Endothelial cell of umbilical vein (primary cell): ENCODE measurements at regions of chr21 and their contacts with region 1.

Region 1: GRCh38 chr21:29195981-29196669 is 65.7 kb downstream of the MAP3K7CL start:
- DNase-seq: peak; percentile 90
- H3K4me3 ChIP-seq: peak overlapping the region in 2 of 3 experiments; percentile 38 to 44
- H3K27ac ChIP-seq: peak overlapping the region; percentile 92
- H3K4me1 ChIP-seq: peaks cover 32% of the 10 kb centered on the region
- H3K27me3 ChIP-seq: no peaks in the 10 kb centered on the region
- CTCF ChIP-seq: peak; percentile 47 to 56
- POLR2A ChIP-seq: no peak

Region 2: GRCh38 chr21:29208682-29209059 is 12.5 kb after region 1 on chr21:
- CTCF ChIA-PET with region 1: interaction called, 16 read pairs
- POLR2A ChIA-PET with region 1: no interaction called
- dilution Hi-C with region 1: no loop called
- intact Hi-C with region 1: no loop called
- DNase-seq: peak; percentile 84
- H3K4me3 ChIP-seq: peak overlapping the region in 1 of 3 experiments; percentile 38
- H3K27ac ChIP-seq: peak overlapping the region; percentile 97
- H3K4me1 ChIP-seq: peaks cover 31% of the 10 kb centered on the region
- H3K27me3 ChIP-seq: no peaks in the 10 kb centered on the region
- CTCF ChIP-seq: no peak
- POLR2A ChIP-seq: no peak

Region 3: GRCh38 chr21:29217818-29218291 is 21.7 kb after region 1 on chr21:
- CTCF ChIA-PET with region 1: no interaction called
- POLR2A ChIA-PET with region 1: no interaction called
- dilution Hi-C with region 1: no loop called
- intact Hi-C with region 1: loop called (anchors 1 kb)
- DNase-seq: peak; percentile 97
- H3K4me3 ChIP-seq: no peak overlapping the region
- H3K27ac ChIP-seq: peak overlapping the region; percentile 81
- H3K4me1 ChIP-seq: peaks cover 23% of the 10 kb centered on the region
- H3K27me3 ChIP-seq: no peaks in the 10 kb centered on the region
- CTCF ChIP-seq: no peak
- POLR2A ChIP-seq: peak; percentile 45